Endothelial cell of umbilical vein (primary cell): ENCODE measurements at regions of chr5 and their contacts with region 1.

Region 1: GRCh38 chr5:143403593-143404415 is at the start of gene NR3C1:
- DNase-seq: peak; percentile 78
- H3K4me3 ChIP-seq: peak within 1 kb of the TSS; percentile 64 to 94 (median 87)
- H3K27ac ChIP-seq: peak within 1 kb of the TSS; percentile 94
- H3K4me1 ChIP-seq: peaks cover 39% of the 10 kb centered on the region
- H3K27me3 ChIP-seq: no peaks in the 10 kb centered on the region
- CTCF ChIP-seq: peak; percentile 16 to 62
- POLR2A ChIP-seq: no peak
- total RNA-seq, gene NR3C1: 17.0 and 21.2 TPM in 2 replicates

Region 2: GRCh38 chr5:142922223-142922952 is 481.4 kb before region 1 on chr5:
- CTCF ChIA-PET with region 1: interaction called, 11 read pairs
- POLR2A ChIA-PET with region 1: interaction called, 4 read pairs
- dilution Hi-C with region 1: no loop called
- intact Hi-C with region 1: loop called (anchors 1 kb)
- DNase-seq: peak; percentile 90
- H3K4me3 ChIP-seq: no peak overlapping the region
- H3K27ac ChIP-seq: peak overlapping the region; percentile 62
- H3K4me1 ChIP-seq: peaks cover 34% of the 10 kb centered on the region
- H3K27me3 ChIP-seq: no peaks in the 10 kb centered on the region
- CTCF ChIP-seq: peak in 1 of 2 donors; percentile 24
- POLR2A ChIP-seq: no peak

Region 3: GRCh38 chr5:143106174-143106573 is 297.6 kb before region 1 on chr5:
- CTCF ChIA-PET with region 1: interaction called, 19 read pairs
- POLR2A ChIA-PET with region 1: no interaction called
- dilution Hi-C with region 1: no loop called
- intact Hi-C with region 1: loop called (anchors 1 kb)
- DNase-seq: peak; percentile 79
- H3K4me3 ChIP-seq: no peak overlapping the region
- H3K27ac ChIP-seq: no peak overlapping the region
- H3K4me1 ChIP-seq: no peaks in the 10 kb centered on the region
- H3K27me3 ChIP-seq: no peaks in the 10 kb centered on the region
- CTCF ChIP-seq: peak in 1 of 2 donors; percentile 35
- POLR2A ChIP-seq: no peak

Region 4: DNA sequence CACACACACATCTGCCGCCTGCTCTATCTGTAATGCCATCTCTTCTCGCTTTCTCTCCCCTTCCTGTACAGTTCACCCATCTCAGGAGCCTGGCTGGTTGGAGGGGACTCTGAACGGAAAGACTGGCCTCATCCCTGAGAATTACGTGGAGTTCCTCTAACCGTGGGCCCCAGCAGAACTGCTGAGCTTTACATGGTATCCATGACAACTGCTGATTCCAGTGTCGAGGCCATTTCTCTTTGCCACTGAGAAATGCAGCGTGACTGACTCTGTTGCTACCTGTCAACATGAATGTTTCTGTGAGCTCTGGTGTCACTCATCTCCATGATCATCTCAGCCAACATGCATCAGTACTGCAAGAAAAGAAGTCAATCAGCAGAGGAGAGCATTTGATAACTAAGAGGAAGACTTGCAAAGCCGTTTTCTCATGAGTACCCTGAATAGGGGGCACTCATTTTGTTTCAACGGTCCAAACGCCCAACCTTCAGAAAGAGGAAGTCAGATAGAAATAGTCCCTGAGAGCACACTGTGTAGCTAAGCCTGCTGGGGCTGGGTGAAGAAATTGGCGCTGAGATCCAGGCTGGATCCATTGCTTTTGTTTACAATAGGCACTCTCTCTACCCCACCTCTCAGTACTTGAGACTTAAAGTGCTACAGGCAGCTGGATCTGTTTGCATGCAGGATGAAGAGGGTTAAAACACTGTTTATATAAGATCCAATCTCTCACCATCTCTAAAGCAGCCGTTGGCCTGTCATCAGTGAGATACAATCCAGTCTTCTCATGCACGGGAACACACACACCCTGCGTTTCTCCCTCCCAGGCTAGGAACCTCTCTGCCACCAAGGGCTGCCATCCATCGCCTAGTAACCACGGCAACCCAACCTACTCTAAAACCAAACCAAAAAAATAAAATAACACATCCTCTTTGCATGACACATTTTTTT is 181.2 kb before region 1 on chr5:
- CTCF ChIA-PET with region 1: interaction called, 16 read pairs
- POLR2A ChIA-PET with region 1: no interaction called
- dilution Hi-C with region 1: loop called (anchors 25 kb)
- intact Hi-C with region 1: no loop called
- DNase-seq: no peak
- H3K4me3 ChIP-seq: no peak overlapping the region
- H3K27ac ChIP-seq: no peak overlapping the region
- H3K4me1 ChIP-seq: peaks cover 20% of the 10 kb centered on the region
- H3K27me3 ChIP-seq: no peaks in the 10 kb centered on the region
- CTCF ChIP-seq: no peak
- POLR2A ChIP-seq: no peak

Region 5: DNA sequence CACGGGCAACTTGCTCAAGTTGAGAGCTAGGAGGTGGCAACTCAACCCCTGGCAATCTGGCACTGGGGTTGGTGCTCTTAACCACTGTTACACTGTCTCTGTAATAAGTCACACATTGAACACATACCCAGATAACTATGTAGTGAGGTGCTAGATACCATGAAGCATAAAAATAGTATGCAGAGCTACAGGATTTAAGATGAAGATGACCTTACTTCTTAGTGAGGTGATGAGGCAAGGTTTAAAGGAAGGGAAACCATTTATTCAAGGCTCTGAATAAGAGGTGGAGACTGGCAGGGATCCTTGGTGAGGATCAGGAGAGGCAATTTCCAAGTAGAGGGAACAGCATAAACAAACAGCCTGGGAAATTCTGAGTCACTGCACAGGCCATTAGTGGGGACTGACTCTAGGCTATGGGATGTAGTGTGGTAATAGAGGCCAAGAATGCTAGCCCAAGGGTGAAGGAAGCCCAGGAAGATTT is 67.3 kb after region 1 on chr5:
- CTCF ChIA-PET with region 1: no interaction called
- POLR2A ChIA-PET with region 1: no interaction called
- dilution Hi-C with region 1: no loop called
- intact Hi-C with region 1: no loop called
- DNase-seq: no peak
- H3K4me3 ChIP-seq: no peak overlapping the region
- H3K27ac ChIP-seq: no peak overlapping the region
- H3K4me1 ChIP-seq: no peaks in the 10 kb centered on the region
- H3K27me3 ChIP-seq: no peaks in the 10 kb centered on the region
- CTCF ChIP-seq: no peak
- POLR2A ChIP-seq: no peak

Region 6: DNA sequence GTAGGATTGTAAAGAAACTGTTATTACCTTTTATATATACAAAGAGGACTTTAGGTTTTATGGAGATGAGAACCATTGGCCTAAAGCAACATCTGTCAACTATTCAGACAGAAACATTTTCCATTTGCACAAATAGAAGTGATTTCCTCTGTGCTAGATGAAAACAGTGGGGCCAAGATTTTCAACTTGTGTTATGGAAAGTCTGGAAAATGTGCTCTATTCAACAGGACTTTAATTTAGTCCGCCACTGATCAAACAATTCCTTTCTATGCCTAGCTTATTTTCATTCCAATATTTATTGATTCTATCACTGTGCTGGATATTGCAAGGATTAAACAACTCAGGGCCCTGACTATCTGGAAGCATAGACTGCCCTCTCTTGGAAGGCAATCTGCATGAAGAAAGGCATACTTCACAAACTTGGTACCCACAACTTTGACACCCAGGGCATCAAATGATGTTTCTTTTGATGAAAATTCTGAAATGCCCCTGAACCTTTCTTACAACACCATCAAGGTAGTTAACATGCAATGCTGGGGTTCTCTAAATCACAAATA is 281.5 kb after region 1 on chr5:
- CTCF ChIA-PET with region 1: interaction called, 10 read pairs
- POLR2A ChIA-PET with region 1: no interaction called
- dilution Hi-C with region 1: no loop called
- intact Hi-C with region 1: no loop called
- DNase-seq: peak; percentile 5
- H3K4me3 ChIP-seq: no peak overlapping the region
- H3K27ac ChIP-seq: no peak overlapping the region
- H3K4me1 ChIP-seq: no peaks in the 10 kb centered on the region
- H3K27me3 ChIP-seq: peaks cover 0 to 1% of the 10 kb centered on the region in 2 experiments
- CTCF ChIP-seq: no peak
- POLR2A ChIP-seq: no peak

Region 7: DNA sequence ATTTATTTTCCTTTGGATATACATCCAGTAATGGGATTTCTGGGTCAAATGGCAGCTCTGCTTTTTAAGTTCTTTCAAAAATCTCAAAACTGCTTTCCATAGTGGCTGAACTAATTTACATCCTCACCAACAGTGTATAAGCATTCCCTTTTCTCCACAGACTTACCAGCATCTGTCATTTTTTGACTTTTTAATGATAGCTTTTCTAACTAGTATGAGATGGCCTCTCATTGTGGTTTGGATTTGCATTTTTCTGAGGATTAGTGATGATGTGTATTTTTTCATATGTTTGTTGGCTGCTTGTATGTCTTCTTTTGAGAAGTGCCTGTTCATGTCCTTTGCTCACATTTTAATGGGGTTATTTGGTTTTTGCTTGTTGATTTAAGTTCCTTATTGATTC is 318.1 kb after region 1 on chr5:
- CTCF ChIA-PET with region 1: no interaction called
- POLR2A ChIA-PET with region 1: no interaction called
- dilution Hi-C with region 1: no loop called
- intact Hi-C with region 1: no loop called
- DNase-seq: no peak
- H3K4me3 ChIP-seq: no peak overlapping the region
- H3K27ac ChIP-seq: no peak overlapping the region
- H3K4me1 ChIP-seq: no peaks in the 10 kb centered on the region
- H3K27me3 ChIP-seq: no peaks in the 10 kb centered on the region
- CTCF ChIP-seq: no peak
- POLR2A ChIP-seq: no peak

Region 8: DNA sequence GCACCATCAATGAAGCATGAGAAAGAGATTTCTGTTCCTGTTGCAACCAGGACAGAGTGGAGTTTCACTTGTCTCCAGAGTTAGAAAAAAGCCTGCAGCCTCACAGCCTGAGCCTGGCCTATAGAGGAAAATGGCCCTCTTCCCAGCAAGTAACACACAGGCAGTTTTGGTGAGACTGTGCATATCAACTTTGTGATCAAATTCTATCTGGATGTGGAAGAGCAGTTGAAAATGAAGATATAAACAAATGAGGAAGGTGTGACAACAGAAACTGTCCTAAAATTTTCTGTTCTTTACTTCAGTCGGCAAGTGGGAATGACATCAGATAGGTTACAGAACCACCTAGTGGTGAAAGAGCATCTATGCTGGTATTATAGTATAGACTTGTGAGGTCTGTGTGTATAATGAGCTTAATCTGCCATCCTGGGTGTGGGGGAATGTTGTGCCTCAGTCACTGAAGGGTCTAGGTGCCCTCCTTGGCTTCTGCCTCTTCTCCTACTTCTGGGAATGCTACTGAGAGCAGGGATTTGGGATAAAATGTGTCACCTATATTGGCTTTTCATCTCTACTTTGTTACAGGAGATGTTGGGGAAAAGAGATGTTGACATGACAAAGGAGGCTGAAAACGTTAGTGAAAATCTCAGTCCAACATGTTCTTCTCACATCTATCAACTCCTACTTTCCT is 738.5 kb after region 1 on chr5:
- CTCF ChIA-PET with region 1: interaction called, 9 read pairs
- POLR2A ChIA-PET with region 1: no interaction called
- dilution Hi-C with region 1: no loop called
- intact Hi-C with region 1: loop called (anchors 1 kb)
- DNase-seq: peak; percentile 68
- H3K4me3 ChIP-seq: no peak overlapping the region
- H3K27ac ChIP-seq: no peak overlapping the region
- H3K4me1 ChIP-seq: peaks cover 29% of the 10 kb centered on the region
- H3K27me3 ChIP-seq: no peaks in the 10 kb centered on the region
- CTCF ChIP-seq: peak; percentile 55 to 71
- POLR2A ChIP-seq: no peak